Caco-2 (cell line): ENCODE measurements at regions of chr2 and their contacts with region 1.

Region 1: GRCh38 chr2:239401067-239401880 is 454 bp upstream of the HDAC4 start:
- DNase-seq: peak; percentile 96 to 97
- H3K4me3 ChIP-seq: peak overlapping the region; percentile 68
- H3K4me3 Mint-ChIP-seq: peak overlapping the region; percentile 81
- H3K27ac Mint-ChIP-seq: peak overlapping the region; percentile 91
- H3K4me1 ChIP-seq: no peaks in the 10 kb centered on the region
- H3K4me1 Mint-ChIP-seq: no peaks in the 10 kb centered on the region
- H3K27me3 ChIP-seq: no peaks in the 10 kb centered on the region
- H3K27me3 Mint-ChIP-seq: no peaks in the 10 kb centered on the region
- CTCF ChIP-seq: no peak

Region 2: GRCh38 chr2:239275044-239275685 is 126.1 kb before region 1 on chr2:
- CTCF ChIA-PET with region 1: no interaction called
- POLR2A ChIA-PET with region 1: no interaction called
- intact Hi-C with region 1: loop called (anchors 10 kb)
- DNase-seq: no peak
- H3K4me3 ChIP-seq: no peak overlapping the region
- H3K4me3 Mint-ChIP-seq: no peak overlapping the region
- H3K27ac Mint-ChIP-seq: no peak overlapping the region
- H3K4me1 ChIP-seq: no peaks in the 10 kb centered on the region
- H3K4me1 Mint-ChIP-seq: no peaks in the 10 kb centered on the region
- H3K27me3 ChIP-seq: no peaks in the 10 kb centered on the region
- H3K27me3 Mint-ChIP-seq: no peaks in the 10 kb centered on the region
- CTCF ChIP-seq: no peak

Region 3: GRCh38 chr2:239569401-239570090 is 168.3 kb after region 1 on chr2:
- CTCF ChIA-PET with region 1: no interaction called
- POLR2A ChIA-PET with region 1: no interaction called
- intact Hi-C with region 1: loop called (anchors 10 kb)
- DNase-seq: no peak
- H3K4me3 ChIP-seq: no peak overlapping the region
- H3K4me3 Mint-ChIP-seq: no peak overlapping the region
- H3K27ac Mint-ChIP-seq: no peak overlapping the region
- H3K4me1 ChIP-seq: peaks cover 7% of the 10 kb centered on the region; the same call in 1 of the 2 replicates
- H3K4me1 Mint-ChIP-seq: no peaks in the 10 kb centered on the region
- H3K27me3 ChIP-seq: no peaks in the 10 kb centered on the region
- H3K27me3 Mint-ChIP-seq: no peaks in the 10 kb centered on the region
- CTCF ChIP-seq: no peak